BJ (cell line): ENCODE measurements at regions of chr1 and their contacts with region 1.

Region 1: DNA sequence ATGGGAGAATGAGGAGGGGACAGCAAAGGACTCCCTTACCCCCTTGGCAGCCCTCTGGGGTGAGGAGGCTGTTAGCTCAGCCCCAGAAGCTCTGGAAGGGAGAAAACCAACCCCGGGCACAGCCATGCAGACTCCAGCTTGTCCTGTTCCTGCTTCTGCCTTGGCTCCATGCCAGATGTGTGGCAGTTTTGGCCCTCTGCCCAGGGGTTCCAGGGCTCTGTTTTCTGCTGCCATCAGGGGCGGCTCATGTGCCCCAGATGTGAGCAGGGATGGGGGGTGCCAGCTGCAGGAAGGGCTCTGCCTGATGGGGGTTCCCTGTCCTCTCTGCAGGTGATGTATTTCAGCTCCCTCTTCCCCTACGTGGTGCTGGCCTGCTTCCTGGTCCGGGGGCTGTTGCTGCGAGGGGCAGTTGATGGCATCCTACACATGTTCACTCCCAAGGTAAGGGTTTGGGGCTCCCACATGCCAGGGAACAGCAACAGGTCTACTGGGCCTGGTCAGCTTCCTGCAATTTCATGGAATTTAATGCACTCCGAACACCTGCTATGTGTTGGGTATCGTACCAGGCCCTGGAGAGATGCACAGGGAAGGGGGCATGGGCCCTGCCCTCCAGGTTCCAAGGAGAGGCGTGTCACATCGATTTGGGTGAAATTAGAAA is 26.1 kb downstream of the SLC6A17 start:
- DNase-seq: no peak
- H3K4me3 ChIP-seq: no peak overlapping the region
- H3K27me3 ChIP-seq: no peaks in the 10 kb centered on the region; the same call in 1 of the 2 replicates
- CTCF ChIP-seq: no peak

Region 2: DNA sequence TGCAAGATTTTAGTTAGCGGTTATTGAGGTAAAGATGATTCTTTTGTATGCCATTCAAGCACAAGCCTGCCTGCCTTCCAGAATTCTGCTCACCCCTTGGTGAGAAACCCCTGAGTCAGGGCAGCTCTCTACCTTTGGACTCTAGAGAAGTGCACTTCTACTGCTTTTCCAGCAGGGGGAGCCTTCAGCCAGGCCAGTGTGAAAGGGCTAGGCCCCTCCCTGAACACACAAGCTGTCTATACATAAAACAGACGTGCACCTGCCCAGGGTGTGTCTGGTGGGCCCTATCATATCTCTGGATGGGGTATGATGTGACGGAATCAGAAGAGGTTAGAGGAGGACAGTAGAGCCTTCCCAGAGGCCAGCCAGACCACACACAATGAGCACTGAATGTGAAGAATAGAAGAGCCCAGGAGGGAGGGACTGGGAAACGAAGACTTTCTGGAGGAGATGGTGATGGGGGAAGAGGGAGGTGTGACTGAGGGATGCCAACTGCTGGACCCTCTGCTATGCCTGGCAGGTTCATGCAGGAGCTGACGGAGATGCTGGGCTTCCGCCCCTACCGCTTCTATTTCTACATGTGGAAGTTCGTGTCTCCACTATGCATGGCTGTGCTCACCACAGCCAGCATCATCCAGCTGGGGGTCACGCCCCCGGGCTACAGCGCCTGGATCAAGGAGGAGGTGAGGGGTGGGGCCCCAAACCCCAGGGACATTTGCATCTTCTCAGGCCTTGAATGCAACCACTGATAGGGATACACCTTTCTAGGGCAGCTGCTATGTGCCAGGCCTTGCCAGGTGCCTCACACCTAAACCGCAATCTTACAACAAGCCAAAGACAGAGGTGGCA is 20.7 kb after region 1 on chr1:
- CTCF ChIA-PET with region 1: interaction called, 24 read pairs
- POLR2A ChIA-PET with region 1: no interaction called
- DNase-seq: no peak
- H3K4me3 ChIP-seq: no peak overlapping the region
- H3K27me3 ChIP-seq: no peaks in the 10 kb centered on the region
- CTCF ChIP-seq: peak; percentile 98

Region 3: DNA sequence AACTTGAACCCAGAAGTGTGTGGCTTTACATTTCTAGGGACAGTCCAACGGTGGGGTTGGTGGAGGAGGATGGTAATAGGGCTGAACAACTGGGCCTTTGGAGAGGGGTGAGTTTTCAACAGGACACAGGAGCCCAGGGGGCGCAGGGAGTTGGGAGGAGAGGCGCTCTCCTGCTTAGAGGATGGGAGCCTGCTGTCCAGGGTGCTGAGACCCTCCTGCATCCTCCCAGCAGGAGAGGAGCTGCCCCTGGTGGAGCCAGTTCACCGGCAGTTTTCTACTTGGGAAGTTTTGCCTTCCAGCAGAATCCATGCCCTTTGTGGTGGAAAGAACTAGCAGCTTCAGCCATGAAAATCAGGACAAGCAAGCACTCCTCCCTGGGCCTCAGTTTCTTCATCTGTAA is 42.3 kb after region 1 on chr1:
- CTCF ChIA-PET with region 1: no interaction called
- POLR2A ChIA-PET with region 1: no interaction called
- DNase-seq: no peak
- H3K4me3 ChIP-seq: no peak overlapping the region
- H3K27me3 ChIP-seq: no peaks in the 10 kb centered on the region
- CTCF ChIP-seq: 0 out of 2 replicates have a peak, but pooled peaks have one; percentile 4

Region 4: GRCh38 chr1:110235834-110236682 is 59.6 kb after region 1 on chr1:
- CTCF ChIA-PET with region 1: no interaction called
- POLR2A ChIA-PET with region 1: no interaction called
- DNase-seq: peak; percentile 83
- H3K4me3 ChIP-seq: no peak overlapping the region
- H3K27me3 ChIP-seq: no peaks in the 10 kb centered on the region
- CTCF ChIP-seq: no peak